Mammary epithelial cell (primary cell): ENCODE measurements at regions of chr2 and their contacts with region 1.

Region 1: GRCh38 chr2:70301344-70302194 is at the start of gene FAM136A:
- DNase-seq: peak; percentile 65
- H3K4me3 ChIP-seq: peak within 1 kb of the TSS; percentile 72 to 87 (median 83)
- H3K27ac ChIP-seq: peak within 1 kb of the TSS; percentile 58
- H3K4me1 ChIP-seq: peaks cover 9% of the 10 kb centered on the region
- H3K27me3 ChIP-seq: no peaks in the 10 kb centered on the region
- CTCF ChIP-seq: peak; percentile 64 to 86
- total RNA-seq, gene FAM136A: 14.5 to 37.8 TPM

Region 2: GRCh38 chr2:69914170-69914960 is 387.2 kb before region 1 on chr2:
- CTCF ChIA-PET with region 1: no interaction called
- dilution Hi-C with region 1: no loop called
- in situ Hi-C with region 1: no loop called
- intact Hi-C with region 1: loop called (anchors 1 kb)
- DNase-seq: peak; percentile 100
- H3K4me3 ChIP-seq: peak overlapping the region; percentile 63 to 91 (median 79)
- H3K27ac ChIP-seq: peak overlapping the region; percentile 90
- H3K4me1 ChIP-seq: peaks cover 31% of the 10 kb centered on the region
- H3K27me3 ChIP-seq: no peaks in the 10 kb centered on the region
- CTCF ChIP-seq: peak in 1 of 2 donors; percentile 10

Region 3: GRCh38 chr2:70340921-70341765 is 39.6 kb after region 1 on chr2:
- CTCF ChIA-PET with region 1: no interaction called
- dilution Hi-C with region 1: no loop called
- in situ Hi-C with region 1: loop called in 1 of 2 experiments (anchors 5 kb)
- intact Hi-C with region 1: loop called (anchors 1 kb)
- DNase-seq: peak; percentile 57
- H3K4me3 ChIP-seq: no peak overlapping the region
- H3K27ac ChIP-seq: peak overlapping the region; percentile 2
- H3K4me1 ChIP-seq: peaks cover 33% of the 10 kb centered on the region
- H3K27me3 ChIP-seq: no peaks in the 10 kb centered on the region
- CTCF ChIP-seq: peak; percentile 87 to 89

Region 4: DNA sequence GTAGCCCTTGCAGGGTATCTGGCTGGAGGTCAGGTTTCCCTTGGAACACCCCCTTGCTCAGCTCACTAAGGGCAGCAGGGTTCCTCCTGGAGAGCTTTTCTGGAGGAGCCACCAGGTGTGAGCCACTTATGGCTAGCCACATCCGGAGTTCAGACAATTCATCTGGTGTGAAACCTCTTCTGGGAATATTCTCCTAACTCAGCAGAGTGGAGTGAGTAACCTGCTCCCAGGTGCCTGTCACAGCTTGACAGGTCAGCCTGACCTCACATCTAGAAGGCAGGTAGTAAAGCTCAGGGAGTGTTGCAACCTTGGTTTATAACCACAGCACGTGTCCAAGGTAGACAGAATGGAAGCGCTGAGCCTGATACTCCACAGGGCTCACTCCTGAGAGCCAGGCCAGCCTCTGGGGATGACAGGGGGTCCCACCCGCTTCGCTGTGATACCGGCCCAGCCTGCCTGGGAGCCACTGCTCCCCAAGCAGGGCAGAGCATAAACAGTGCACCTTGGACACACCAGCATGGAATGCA is 314.7 kb after region 1 on chr2:
- CTCF ChIA-PET with region 1: interaction called, 22 read pairs
- dilution Hi-C with region 1: no loop called
- in situ Hi-C with region 1: no loop called
- intact Hi-C with region 1: loop called (anchors 1 kb)
- DNase-seq: peak; percentile 99
- H3K4me3 ChIP-seq: no peak overlapping the region
- H3K27ac ChIP-seq: peak overlapping the region; percentile 46
- H3K4me1 ChIP-seq: peaks cover 25% of the 10 kb centered on the region
- H3K27me3 ChIP-seq: no peaks in the 10 kb centered on the region
- CTCF ChIP-seq: no peak

Region 5: DNA sequence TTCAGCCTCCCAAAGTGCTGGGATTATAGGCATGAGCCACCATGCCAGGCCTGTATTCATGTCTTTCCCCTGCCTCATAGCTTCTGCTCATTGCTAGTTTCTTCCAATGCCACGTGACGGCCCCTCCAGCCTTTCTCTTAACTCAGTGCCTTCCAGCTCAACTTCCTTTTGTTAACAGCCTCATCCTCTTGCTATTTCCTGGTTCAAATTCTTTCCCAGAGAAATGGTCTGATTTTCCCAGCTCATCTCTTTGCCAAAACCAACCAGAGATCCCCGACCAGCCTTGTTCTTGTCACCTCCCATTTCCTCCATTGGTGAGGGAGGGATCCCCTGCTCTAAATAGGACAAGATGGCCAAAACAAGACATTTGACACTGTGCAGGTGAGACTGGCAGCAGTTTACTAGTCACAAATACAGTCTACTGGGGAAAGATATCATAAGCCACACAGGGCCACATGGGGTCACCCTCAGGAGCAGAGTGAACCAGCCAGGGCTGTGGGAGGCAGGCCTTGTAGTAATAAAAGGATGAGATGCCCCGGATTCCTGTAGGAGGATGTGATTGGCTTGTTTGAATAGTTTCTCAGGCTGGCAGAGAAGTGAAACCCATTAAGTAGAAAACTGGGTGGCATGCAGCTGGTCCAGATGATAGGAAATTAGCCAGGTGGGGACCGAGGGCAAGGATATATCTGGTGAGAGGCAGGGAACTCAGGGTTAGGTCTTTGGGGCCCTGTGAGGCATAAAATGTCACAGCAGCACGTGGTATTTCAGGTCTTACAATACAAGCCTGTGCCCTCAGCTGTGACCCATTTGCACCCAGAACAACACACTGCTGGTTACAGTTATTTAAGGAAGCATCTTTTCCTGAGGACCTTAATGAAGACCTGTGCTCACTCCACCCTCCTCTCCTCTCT is 527.6 kb after region 1 on chr2:
- CTCF ChIA-PET with region 1: no interaction called
- dilution Hi-C with region 1: loop called (anchors 25 kb)
- in situ Hi-C with region 1: no loop called
- intact Hi-C with region 1: no loop called
- DNase-seq: no peak
- H3K4me3 ChIP-seq: no peak overlapping the region
- H3K27ac ChIP-seq: no peak overlapping the region
- H3K4me1 ChIP-seq: no peaks in the 10 kb centered on the region
- H3K27me3 ChIP-seq: peaks cover 5% of the 10 kb centered on the region
- CTCF ChIP-seq: no peak

Region 6: DNA sequence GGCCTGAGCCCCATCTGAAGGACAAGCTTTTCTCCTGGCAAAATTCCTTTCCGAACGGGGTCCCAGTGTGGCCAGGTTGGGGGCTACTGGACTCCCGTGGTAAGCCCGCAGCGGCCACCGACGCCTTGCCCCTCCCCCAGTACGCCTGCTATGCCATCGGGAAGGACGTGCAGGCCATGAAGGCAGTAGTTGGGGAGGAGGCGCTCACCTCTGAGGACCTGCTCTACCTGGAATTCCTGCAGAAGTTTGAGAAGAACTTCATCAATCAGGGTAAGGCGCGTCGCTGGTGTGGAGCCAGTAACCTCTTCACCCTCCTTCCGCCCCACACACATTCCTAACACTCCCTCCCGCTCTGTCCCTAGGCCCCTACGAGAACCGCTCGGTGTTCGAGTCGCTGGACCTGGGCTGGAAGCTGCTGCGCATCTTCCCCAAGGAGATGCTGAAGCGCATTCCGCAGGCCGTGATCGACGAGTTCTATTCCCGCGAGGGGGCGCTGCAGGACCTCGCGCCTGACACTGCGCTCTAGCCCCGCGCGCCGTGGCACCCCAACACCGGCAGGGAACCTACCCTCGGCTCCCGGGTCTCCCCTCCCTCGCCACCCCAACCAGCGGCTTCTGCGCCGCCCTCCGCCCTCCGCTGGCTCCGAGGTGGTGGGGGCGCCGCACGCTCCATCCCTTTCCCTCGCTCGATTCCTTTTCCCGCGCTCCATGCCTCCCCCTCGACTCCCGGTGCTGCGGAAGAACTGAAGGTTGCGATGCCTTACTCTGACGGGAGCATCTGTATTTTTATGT is 663.2 kb after region 1 on chr2:
- CTCF ChIA-PET with region 1: interaction called, 4 read pairs
- dilution Hi-C with region 1: loop called (anchors 25 kb)
- in situ Hi-C with region 1: no loop called
- intact Hi-C with region 1: no loop called
- DNase-seq: peak; percentile 52
- H3K4me3 ChIP-seq: peak overlapping the region; percentile 40 to 47 (median 43)
- H3K27ac ChIP-seq: no peak overlapping the region
- H3K4me1 ChIP-seq: peaks cover 3% of the 10 kb centered on the region
- H3K27me3 ChIP-seq: no peaks in the 10 kb centered on the region
- CTCF ChIP-seq: peak; percentile 52 to 87